Gastrocnemius medialis (tissue), 4 donors: ENCODE measurements at regions of chr1 and their contacts with region 1.

Region 1: GRCh38 chr1:158177700-158178450 is 2.8 kb upstream of the CD1D start:
- DNase-seq: peak; percentile 85 to 91
- ATAC-seq: peak; percentile 91 to 92
- H3K4me3 ChIP-seq: peak overlapping the region; percentile 56 to 64 (median 58)
- H3K27ac ChIP-seq: peak overlapping the region; percentile 32 to 71 (median 60)
- H3K4me1 ChIP-seq: peaks cover 10 to 32% of the 10 kb centered on the region in 2 donors
- H3K27me3 ChIP-seq: peaks cover 0 to 6% (median 5%) of the 10 kb centered on the region in 3 donors
- CTCF ChIP-seq: no peak
- POLR2A ChIP-seq: peak in 1 of 2 donors; percentile 16

Region 2: DNA sequence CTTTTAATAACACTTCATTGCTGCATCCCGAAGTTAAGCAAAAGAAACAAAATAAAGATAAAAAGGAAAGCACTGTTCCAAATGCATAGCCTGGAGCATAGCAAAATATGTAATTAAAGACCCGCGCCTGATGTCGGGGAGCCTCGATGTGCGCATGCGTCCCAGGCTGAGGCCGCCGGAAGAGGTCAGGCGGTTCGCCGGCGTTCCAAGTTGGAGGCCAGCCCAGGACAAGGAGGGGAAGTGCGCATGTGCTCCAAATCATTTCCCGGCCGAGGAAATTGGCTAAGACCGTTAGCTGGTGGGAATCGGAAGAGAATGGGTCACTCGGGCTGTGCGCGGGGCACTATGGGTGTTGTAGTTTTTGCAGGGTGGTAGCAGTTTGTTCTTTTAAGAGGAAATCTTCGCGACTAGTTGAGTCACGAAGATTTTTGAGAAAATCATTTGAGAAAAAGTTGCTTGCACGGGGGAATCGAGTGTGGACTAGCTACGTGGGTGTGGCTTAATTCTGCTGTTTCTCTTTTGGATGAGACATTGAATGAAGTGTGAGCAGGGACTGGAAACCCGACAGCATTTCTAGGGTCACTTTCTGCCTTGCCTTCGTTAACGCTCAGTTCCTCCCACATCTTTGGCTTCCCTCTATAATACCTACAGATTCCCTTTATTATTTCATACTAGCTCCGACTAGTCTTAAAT is 28.2 kb before region 1 on chr1:
- in situ Hi-C with region 1: no loop called
- intact Hi-C with region 1: loop called (anchors 1 kb)
- DNase-seq: peak; percentile 90 to 94
- ATAC-seq: peak; percentile 99 to 100
- H3K4me3 ChIP-seq: peak overlapping the region; percentile 56 to 62 (median 58)
- H3K27ac ChIP-seq: peak overlapping the region; percentile 68 to 84 (median 72)
- H3K4me1 ChIP-seq: peaks cover 5 to 23% of the 10 kb centered on the region in 2 donors
- H3K27me3 ChIP-seq: no peaks in the 10 kb centered on the region
- CTCF ChIP-seq: no peak
- POLR2A ChIP-seq: peak in 1 of 2 donors; percentile 7